HepG2 (cell line): ENCODE measurements at regions of chr15 and their contacts with region 1.

Region 1: DNA sequence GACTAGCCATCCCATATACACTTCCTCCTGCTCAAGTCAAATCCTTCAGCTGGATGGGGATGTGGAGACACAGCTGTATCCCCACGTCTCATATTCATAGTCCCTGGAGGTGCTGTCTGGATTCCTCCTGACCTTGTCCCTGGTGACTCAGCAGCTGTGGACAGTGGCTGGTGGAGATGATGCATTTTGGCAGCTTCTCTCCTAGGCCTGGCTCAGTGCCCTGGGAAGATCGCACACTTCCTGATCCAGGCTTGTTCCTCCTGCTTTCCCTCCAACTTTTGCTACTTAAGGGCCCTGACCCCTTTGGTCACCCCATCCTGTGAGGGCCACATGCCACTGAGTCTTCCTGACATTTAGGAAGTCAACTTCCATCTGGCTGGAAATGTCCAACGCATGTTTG is 44.4 kb downstream of the ADAMTSL3 start:
- DNase-seq: no peak
- ATAC-seq: no peak
- H3K4me3 ChIP-seq: no peak overlapping the region
- H3K27ac ChIP-seq: no peak overlapping the region
- H3K4me1 ChIP-seq: peaks cover 6% of the 10 kb centered on the region; the same call in 1 of the 2 replicates
- H3K27me3 ChIP-seq: no peaks in the 10 kb centered on the region
- CTCF ChIP-seq: no peak
- EP300 ChIP-seq: no peak
- POLR2A ChIP-seq: no peak
- RAD21 ChIP-seq: no peak

Region 2: DNA sequence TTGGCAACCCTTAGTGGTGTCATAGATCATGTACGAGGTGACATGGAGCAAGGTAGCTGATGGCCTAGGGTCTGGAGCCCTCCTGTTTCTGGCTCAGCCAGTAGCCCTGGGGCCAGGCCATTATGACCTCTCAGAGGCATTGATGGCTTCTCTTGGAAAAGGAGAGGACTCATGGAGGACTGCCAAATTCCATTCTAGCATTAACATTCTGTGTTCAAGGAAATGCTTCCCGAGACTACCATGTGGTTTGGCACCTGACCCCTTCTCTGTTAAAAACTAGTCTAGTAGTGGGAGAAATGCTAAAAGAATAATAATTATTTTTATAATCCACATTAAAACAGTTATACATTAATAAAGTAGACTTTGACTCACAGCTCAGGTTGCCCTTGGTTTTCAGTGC is 84.6 kb before region 1 on chr15:
- CTCF ChIA-PET with region 1: no interaction called
- POLR2A ChIA-PET with region 1: no interaction called
- in situ Hi-C with region 1: no loop called
- intact Hi-C with region 1: no loop called
- DNase-seq: no peak
- ATAC-seq: no peak
- H3K4me3 ChIP-seq: no peak overlapping the region
- H3K27ac ChIP-seq: no peak overlapping the region
- H3K4me1 ChIP-seq: no peaks in the 10 kb centered on the region
- H3K27me3 ChIP-seq: no peaks in the 10 kb centered on the region; a peak in 1 of 5 replicates
- CTCF ChIP-seq: no peak
- EP300 ChIP-seq: no peak
- POLR2A ChIP-seq: no peak
- RAD21 ChIP-seq: no peak

Region 3: GRCh38 chr15:83711236-83711635 is 12.9 kb after region 1 on chr15:
- CTCF ChIA-PET with region 1: no interaction called
- POLR2A ChIA-PET with region 1: no interaction called
- in situ Hi-C with region 1: no loop called
- intact Hi-C with region 1: loop called (anchors 1 kb)
- DNase-seq: no peak
- ATAC-seq: no peak
- H3K4me3 ChIP-seq: no peak overlapping the region
- H3K27ac ChIP-seq: no peak overlapping the region
- H3K4me1 ChIP-seq: no peaks in the 10 kb centered on the region
- H3K27me3 ChIP-seq: no peaks in the 10 kb centered on the region
- CTCF ChIP-seq: no peak
- EP300 ChIP-seq: no peak
- POLR2A ChIP-seq: no peak
- RAD21 ChIP-seq: no peak

Region 4: GRCh38 chr15:83810110-83810509 is 111.8 kb after region 1 on chr15:
- CTCF ChIA-PET with region 1: no interaction called
- POLR2A ChIA-PET with region 1: no interaction called
- in situ Hi-C with region 1: no loop called
- intact Hi-C with region 1: no loop called
- DNase-seq: no peak
- ATAC-seq: no peak
- H3K4me3 ChIP-seq: no peak overlapping the region
- H3K27ac ChIP-seq: no peak overlapping the region
- H3K4me1 ChIP-seq: no peaks in the 10 kb centered on the region
- H3K27me3 ChIP-seq: no peaks in the 10 kb centered on the region
- CTCF ChIP-seq: no peak
- EP300 ChIP-seq: no peak
- POLR2A ChIP-seq: no peak
- RAD21 ChIP-seq: no peak